MCF 10A (cell line): ENCODE measurements at regions of chr4 and their contacts with region 1.

Region 1: GRCh38 chr4:103934178-103934789 is 214.5 kb upstream of the TACR3 start:
- DNase-seq: peak; percentile 67
- H3K4me3 Mint-ChIP-seq: no peak overlapping the region
- H3K27ac Mint-ChIP-seq: no peak overlapping the region
- H3K4me1 Mint-ChIP-seq: no peaks in the 10 kb centered on the region
- H3K27me3 Mint-ChIP-seq: no peaks in the 10 kb centered on the region
- CTCF ChIP-seq: peak; percentile 73

Region 2: GRCh38 chr4:103478729-103479128 is 455.6 kb before region 1 on chr4:
- CTCF ChIA-PET with region 1: no interaction called
- POLR2A ChIA-PET with region 1: no interaction called
- intact Hi-C with region 1: loop called (anchors 5 kb)
- DNase-seq: peak; percentile 33
- H3K4me3 Mint-ChIP-seq: no peak overlapping the region
- H3K27ac Mint-ChIP-seq: no peak overlapping the region
- H3K4me1 Mint-ChIP-seq: no peaks in the 10 kb centered on the region
- H3K27me3 Mint-ChIP-seq: no peaks in the 10 kb centered on the region
- CTCF ChIP-seq: no peak

Region 3: GRCh38 chr4:103948244-103949018 is 14.1 kb after region 1 on chr4:
- CTCF ChIA-PET with region 1: interaction called, 11 read pairs
- POLR2A ChIA-PET with region 1: no interaction called
- intact Hi-C with region 1: no loop called
- DNase-seq: no peak
- H3K4me3 Mint-ChIP-seq: no peak overlapping the region
- H3K27ac Mint-ChIP-seq: no peak overlapping the region
- H3K4me1 Mint-ChIP-seq: no peaks in the 10 kb centered on the region
- H3K27me3 Mint-ChIP-seq: no peaks in the 10 kb centered on the region
- CTCF ChIP-seq: no peak

Region 4: DNA sequence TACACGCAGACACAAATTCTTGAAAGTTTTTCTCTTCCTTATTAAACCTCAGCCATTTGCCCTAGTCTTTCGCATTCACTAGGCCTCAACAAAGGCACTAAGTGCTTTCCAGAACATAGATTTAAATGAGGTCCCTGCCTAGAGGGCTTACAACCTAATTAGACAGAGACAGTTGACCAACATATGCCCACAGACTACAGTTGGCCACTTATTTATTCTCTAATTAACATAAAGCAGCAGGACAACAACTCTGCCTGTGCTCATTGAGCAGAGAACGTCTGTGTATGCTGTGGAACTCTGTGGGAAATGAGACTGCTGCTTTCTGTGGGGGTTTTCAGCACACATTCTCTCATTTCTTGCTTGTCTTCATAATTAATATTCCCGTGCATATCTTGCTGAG is 88.5 kb after region 1 on chr4:
- CTCF ChIA-PET with region 1: no interaction called
- POLR2A ChIA-PET with region 1: no interaction called
- intact Hi-C with region 1: no loop called
- DNase-seq: no peak
- H3K4me3 Mint-ChIP-seq: no peak overlapping the region
- H3K27ac Mint-ChIP-seq: no peak overlapping the region
- H3K4me1 Mint-ChIP-seq: no peaks in the 10 kb centered on the region
- H3K27me3 Mint-ChIP-seq: no peaks in the 10 kb centered on the region
- CTCF ChIP-seq: no peak